Left colon (tissue), 2 donors: ENCODE measurements at regions of chr1 and their contacts with region 1.

Region 1: DNA sequence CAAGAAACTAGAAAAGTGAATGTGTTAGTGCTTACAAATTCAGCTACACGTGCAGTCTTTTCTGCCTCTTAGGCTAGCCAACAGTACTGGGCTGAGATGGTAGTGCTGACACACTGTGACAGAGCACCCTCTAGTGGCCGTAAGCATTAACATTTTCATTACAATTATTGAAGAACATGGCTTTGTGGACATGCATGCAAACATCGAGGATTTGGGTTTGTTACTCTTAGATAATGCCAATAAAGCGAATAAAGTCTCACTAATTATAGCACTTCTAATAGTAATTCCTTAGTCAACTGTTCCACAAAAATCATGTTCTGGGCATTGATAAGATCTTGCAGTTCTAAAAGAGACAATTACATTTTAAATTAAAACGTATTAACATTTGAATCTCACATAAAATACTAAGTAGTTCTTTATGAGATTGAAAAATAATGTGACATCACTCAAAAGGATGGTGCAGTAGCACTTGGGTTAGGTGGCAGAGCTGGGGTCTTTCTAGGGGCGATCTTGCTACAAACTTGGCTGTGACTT is 47.1 kb downstream of the MYSM1 start:
- DNase-seq: peak; percentile 30 to 52
- ATAC-seq: peak; percentile 83

Region 2: GRCh38 chr1:58515794-58516401 is 136.8 kb before region 1 on chr1:
- intact Hi-C with region 1: loop called in 1 of 2 experiments (anchors 5 kb)
- DNase-seq: peak; percentile 22 to 24
- ATAC-seq: peak; percentile 65